ENCODE measurements at regions of chr3 and their contacts with region 1.

Region 1: DNA sequence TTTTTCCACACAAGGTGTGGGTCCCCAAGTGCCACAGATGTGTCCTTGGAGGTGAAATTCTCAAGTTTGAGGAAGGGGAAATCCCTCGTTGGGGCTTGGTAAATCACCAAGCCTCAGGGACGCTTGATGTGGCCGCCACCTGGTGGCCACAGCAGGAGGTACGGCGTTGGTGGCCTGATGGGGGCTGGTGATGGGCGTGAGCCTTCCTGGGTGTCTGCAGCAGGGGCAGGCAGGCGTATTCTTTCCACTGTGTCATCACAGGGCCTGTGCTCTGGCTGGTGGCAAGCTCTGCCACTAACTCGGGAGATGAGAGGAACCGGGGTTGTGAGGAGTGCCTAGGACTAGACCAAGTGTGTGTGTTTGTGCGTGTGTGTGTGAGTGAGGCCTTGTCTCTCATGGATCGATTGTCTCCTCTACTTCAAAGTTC is 4.2 kb downstream of the ACOX2 start:
- DNase-seq: peak; percentile 91
- H3K4me3 Mint-ChIP-seq: no peak overlapping the region
- H3K27ac Mint-ChIP-seq: no peak overlapping the region
- H3K4me1 Mint-ChIP-seq: peaks cover 12% of the 10 kb centered on the region
- H3K27me3 Mint-ChIP-seq: no peaks in the 10 kb centered on the region

Region 2: DNA sequence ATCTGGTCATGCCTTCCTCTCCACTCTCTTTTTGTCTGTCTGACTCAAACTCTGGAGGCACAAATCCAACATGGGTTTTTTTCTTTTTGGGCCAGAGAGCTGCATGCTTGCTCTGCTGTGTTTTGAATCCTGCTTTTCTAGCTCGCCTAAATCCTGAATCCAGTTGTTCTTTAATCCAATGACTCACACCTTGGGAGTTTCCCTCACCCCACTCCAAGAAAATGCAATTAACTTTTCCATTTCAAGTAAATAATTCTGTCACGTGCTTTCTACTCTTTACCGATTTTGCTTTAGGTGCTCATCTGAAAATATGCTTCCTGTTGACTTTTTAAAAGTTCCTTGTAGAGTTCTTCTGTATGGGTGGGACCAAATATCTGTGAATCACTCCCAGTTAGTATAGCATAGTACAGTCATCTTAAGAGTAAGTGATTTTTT is 729.1 kb before region 1 on chr3:
- CTCF ChIA-PET with region 1: no interaction called
- POLR2A ChIA-PET with region 1: no interaction called
- intact Hi-C with region 1: no loop called
- DNase-seq: no peak
- H3K4me3 Mint-ChIP-seq: peak overlapping the region; percentile 10
- H3K27ac Mint-ChIP-seq: peak overlapping the region; percentile 74
- H3K4me1 Mint-ChIP-seq: peaks cover 60% of the 10 kb centered on the region
- H3K27me3 Mint-ChIP-seq: no peaks in the 10 kb centered on the region

Region 3: GRCh38 chr3:58237238-58237940 is 295.4 kb before region 1 on chr3 and contains the start of gene ABHD6:
- CTCF ChIA-PET with region 1: no interaction called
- POLR2A ChIA-PET with region 1: no interaction called
- intact Hi-C with region 1: loop called (anchors 1 kb)
- DNase-seq: peak; percentile 85
- H3K4me3 Mint-ChIP-seq: peak within 1 kb of the TSS; percentile 85
- H3K27ac Mint-ChIP-seq: peak within 1 kb of the TSS; percentile 62
- H3K4me1 Mint-ChIP-seq: peaks cover 8% of the 10 kb centered on the region
- H3K27me3 Mint-ChIP-seq: peaks cover 12% of the 10 kb centered on the region
- total RNA-seq, gene ABHD6: 3.9 to 4.1 TPM

Region 4: DNA sequence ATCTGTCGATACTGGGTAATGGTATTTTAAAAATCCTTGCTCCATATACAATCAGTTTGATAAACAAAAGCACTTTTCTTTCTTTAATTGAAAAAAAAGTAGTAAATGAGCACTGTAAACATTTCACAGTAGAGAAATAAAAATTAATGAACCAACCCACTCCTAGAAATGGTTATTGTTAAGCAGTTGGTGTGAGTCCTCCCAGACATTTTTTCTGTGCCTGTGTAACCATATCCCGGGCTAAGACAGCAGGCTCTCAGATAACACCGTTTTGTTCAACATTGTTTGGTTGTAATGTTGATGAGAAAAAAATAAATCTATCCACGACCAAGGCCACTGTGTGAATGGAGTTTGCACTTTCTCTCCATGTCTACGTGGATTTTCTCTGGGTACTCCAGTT is 157.6 kb before region 1 on chr3:
- CTCF ChIA-PET with region 1: no interaction called
- POLR2A ChIA-PET with region 1: no interaction called
- intact Hi-C with region 1: no loop called
- DNase-seq: no peak
- H3K4me3 Mint-ChIP-seq: no peak overlapping the region
- H3K27ac Mint-ChIP-seq: no peak overlapping the region
- H3K4me1 Mint-ChIP-seq: no peaks in the 10 kb centered on the region
- H3K27me3 Mint-ChIP-seq: no peaks in the 10 kb centered on the region

Region 5: DNA sequence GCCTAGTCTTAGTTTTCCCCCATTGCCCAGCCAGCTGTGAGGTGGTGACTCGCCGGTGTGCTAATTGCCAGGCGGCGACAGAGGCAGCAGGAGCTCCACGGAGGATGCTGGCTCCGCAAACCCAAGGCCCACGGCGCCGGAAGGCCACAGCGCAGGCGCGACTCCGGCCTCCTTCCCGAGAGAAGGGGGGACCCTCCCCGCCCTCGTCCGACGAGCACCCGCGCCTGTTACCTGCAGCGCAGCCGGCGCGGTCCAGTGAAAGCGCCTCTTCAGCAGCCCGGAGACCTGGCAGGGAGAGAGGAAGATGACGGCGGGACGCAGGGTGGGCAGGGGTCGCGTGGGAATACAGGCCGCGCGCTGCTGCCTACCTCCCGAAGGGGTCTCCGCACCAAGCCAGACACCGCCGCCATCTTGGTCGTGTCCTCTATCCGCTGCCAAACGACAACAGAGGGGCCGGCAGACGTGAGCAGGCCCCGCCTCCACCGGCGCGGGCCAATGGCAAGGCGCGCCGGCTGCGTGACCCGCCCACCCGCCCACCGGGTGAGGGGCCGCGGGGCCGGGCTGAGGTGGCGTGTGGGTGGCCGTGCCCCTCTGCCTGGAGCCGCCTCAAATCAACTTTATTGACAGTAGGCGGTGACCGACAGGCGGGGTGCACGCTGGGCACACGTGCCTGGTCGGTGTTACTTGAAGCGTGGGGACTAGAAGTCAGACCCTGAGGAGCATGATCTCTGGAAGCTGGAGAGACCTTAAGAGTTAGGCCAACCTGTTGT is 99.2 kb before region 1 on chr3 and contains the start of gene PDHB:
- CTCF ChIA-PET with region 1: interaction called, 21 read pairs
- POLR2A ChIA-PET with region 1: no interaction called
- intact Hi-C with region 1: loop called (anchors 1 kb)
- DNase-seq: peak; percentile 93
- H3K4me3 Mint-ChIP-seq: peak within 1 kb of the TSS; percentile 92
- H3K27ac Mint-ChIP-seq: peak within 1 kb of the TSS; percentile 91
- H3K4me1 Mint-ChIP-seq: peaks cover 24% of the 10 kb centered on the region
- H3K27me3 Mint-ChIP-seq: no peaks in the 10 kb centered on the region
- total RNA-seq, gene PDHB: 55.6 to 56.3 TPM

Region 6: GRCh38 chr3:58471025-58471887 is 61.6 kb before region 1 on chr3:
- CTCF ChIA-PET with region 1: interaction called, 7 read pairs
- POLR2A ChIA-PET with region 1: no interaction called
- intact Hi-C with region 1: loop called (anchors 2 kb)
- DNase-seq: peak; percentile 80
- H3K4me3 Mint-ChIP-seq: no peak overlapping the region
- H3K27ac Mint-ChIP-seq: peak overlapping the region; percentile 86
- H3K4me1 Mint-ChIP-seq: peaks cover 34% of the 10 kb centered on the region
- H3K27me3 Mint-ChIP-seq: no peaks in the 10 kb centered on the region

Region 7: DNA sequence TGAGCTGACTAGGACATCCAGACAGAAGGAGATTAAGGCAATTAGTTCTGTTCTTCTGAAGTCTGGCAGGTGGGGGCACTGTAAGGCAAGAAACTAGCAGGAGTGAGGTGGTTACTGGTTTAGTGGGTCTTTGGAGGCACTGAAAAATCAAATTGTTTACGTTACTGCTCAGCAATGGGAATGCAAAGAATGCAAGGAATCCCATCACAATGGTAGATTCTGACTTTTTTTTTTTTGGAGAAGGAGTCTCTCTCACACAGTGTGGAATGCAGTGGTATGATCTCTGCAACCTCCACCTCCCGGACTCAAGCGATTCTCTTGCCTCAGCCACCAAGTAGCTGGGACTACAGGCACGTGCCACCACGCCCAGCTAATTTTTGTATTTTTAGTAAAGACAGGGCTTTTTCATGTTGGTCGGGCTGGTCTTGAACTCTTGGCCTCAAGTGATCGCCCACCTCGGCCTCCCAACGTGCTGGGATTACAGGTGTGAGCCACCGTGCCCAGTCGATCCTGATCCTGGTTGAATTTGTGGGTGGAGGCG is 28.0 kb after region 1 on chr3:
- CTCF ChIA-PET with region 1: no interaction called
- POLR2A ChIA-PET with region 1: no interaction called
- intact Hi-C with region 1: no loop called
- DNase-seq: no peak
- H3K4me3 Mint-ChIP-seq: no peak overlapping the region
- H3K27ac Mint-ChIP-seq: no peak overlapping the region
- H3K4me1 Mint-ChIP-seq: no peaks in the 10 kb centered on the region
- H3K27me3 Mint-ChIP-seq: no peaks in the 10 kb centered on the region

Measured in activated CD4-positive, alpha-beta memory T cell treated with anti-CD3 and anti-CD28 coated beads for 36 hours (primary cell).